ENCODE measurements at regions of chr1 and their contacts with region 1.

Region 1: DNA sequence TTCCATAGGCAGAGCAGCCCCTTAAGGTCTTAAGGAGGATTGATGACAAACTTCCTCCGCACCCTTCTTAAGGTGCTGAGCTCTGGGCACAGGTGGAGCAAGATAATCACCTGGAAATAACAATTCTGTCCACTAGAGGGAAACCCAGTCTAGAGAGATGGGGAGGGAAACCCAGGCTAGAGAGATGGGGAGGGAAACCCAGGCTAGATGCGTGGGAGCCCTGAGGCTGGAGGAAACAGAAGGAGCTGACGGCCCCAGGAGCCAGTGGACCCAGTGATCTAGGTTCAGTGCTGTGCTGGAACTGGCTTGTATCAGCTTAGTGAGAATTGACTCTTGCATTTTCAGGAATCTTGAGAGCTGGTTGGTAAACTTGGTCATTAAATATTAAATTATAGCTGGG is 17.8 kb upstream of the MYCL start:
- DNase-seq: peak; percentile 35
- ATAC-seq: peak; percentile 100
- H3K4me3 ChIP-seq: no peak overlapping the region
- H3K27ac ChIP-seq: no peak overlapping the region
- H3K4me1 ChIP-seq: 0 out of 2 replicates have a peak, but pooled peaks cover 3% of the 10 kb centered on the region
- H3K27me3 ChIP-seq: no peaks in the 10 kb centered on the region
- CTCF ChIP-seq: peak; percentile 70 to 91 (median 72)
- EP300 ChIP-seq: no peak
- POLR2A ChIP-seq: no peak
- RAD21 ChIP-seq: peak; percentile 99

Region 2: DNA sequence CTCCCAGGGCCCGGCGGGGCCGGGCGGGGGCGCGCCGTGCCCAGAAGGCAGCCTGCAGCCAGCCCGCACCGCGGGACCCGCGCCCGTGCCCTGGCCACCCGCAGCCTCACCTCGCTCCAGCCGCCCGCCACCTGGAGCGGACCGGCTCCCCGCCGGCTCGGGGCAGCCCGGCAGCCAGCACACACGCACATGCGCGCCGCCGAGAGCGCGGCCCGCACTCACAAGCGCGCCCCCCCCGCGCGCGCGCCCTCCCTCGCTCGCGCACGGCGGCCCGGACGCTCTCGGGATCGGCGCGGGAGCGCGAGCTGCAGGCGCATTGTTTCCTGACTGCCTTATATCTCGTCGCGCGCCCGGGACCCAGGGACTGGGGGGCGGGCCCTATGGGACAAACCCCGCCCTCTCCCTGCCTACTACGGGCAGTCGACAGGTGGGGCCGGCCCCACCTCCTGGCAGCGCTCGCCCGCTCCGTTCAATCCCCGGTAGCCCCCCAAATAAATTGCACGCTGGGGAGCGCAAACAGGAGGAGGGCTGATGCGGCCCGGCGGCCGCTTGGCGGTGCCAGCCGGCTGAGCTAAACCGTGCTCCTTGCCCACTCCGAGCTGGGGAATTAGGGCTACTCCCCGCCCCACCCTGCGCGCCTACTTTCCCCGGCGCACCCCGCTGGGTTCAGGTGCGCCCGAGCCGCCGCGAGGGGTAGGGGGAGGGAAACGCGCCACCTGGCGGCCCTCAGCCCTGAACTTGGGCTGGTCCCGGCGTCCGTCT is 17.7 kb before region 1 on chr1 and contains the start of gene MYCL:
- CTCF ChIA-PET with region 1: interaction called, 39 read pairs
- POLR2A ChIA-PET with region 1: no interaction called
- RAD21 ChIA-PET with region 1: interaction called, 9 read pairs
- SMC1A ChIA-PET with region 1: interaction called, 14 read pairs
- in situ Hi-C with region 1: no loop called
- intact Hi-C with region 1: no loop called
- DNase-seq: no peak
- ATAC-seq: peak; percentile 93
- H3K4me3 ChIP-seq: peak within 1 kb of the TSS; percentile 77
- H3K27ac ChIP-seq: no peak within 1 kb of the TSS
- H3K4me1 ChIP-seq: peaks cover 7% of the 10 kb centered on the region; the same call in 1 of the 2 replicates
- H3K27me3 ChIP-seq: peaks cover 10 to 12% of the 10 kb centered on the region in 2 experiments
- CTCF ChIP-seq: peak; percentile 61 to 84 (median 78)
- EP300 ChIP-seq: no peak
- POLR2A ChIP-seq: peak; percentile 63
- RAD21 ChIP-seq: peak; percentile 69
- polyA plus RNA-seq, gene MYCL: 0.11 to 0.26 TPM

Region 3: GRCh38 chr1:39949871-39950448 is 30.4 kb after region 1 on chr1:
- CTCF ChIA-PET with region 1: interaction called, 34 read pairs
- POLR2A ChIA-PET with region 1: no interaction called
- RAD21 ChIA-PET with region 1: interaction called, 23 read pairs
- SMC1A ChIA-PET with region 1: interaction called, 6 read pairs
- in situ Hi-C with region 1: no loop called
- intact Hi-C with region 1: no loop called
- DNase-seq: no peak
- ATAC-seq: no peak
- H3K4me3 ChIP-seq: no peak overlapping the region
- H3K27ac ChIP-seq: no peak overlapping the region
- H3K4me1 ChIP-seq: peaks cover 18% of the 10 kb centered on the region
- H3K27me3 ChIP-seq: no peaks in the 10 kb centered on the region
- CTCF ChIP-seq: no peak
- EP300 ChIP-seq: no peak
- POLR2A ChIP-seq: no peak
- RAD21 ChIP-seq: no peak

Region 4: DNA sequence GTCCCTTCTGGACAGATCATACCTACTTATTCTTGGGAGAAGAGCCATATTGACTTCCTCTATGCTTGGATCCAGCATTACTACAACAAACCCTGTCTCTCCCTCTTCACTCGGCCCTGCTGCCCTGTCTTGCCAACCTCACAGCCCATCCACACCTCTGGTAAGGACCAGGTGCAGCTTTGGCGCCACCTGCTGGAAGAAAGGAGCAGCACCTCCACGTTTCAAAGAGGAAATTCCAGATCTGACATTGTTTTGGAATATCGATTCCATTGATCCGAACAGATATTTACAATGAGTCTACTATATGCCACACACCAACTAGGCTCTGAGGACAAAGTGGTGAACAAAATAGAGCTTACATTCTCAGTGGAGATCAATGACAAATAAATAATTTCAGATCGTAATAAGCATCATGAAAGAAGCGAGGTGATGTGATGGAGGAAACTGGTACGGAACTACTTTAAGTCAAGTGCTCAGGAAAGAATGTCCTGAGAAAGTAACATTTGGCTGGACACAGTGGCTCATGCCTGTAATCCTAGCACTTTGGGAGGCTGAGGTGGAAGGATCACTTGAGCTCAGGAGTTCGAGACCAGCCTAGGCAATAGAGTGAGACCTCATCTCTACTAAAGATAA is 54.1 kb after region 1 on chr1:
- CTCF ChIA-PET with region 1: interaction called, 261 read pairs
- POLR2A ChIA-PET with region 1: interaction called, 12 read pairs
- RAD21 ChIA-PET with region 1: interaction called, 115 read pairs
- SMC1A ChIA-PET with region 1: interaction called, 157 read pairs
- in situ Hi-C with region 1: loop called (anchors 5 kb)
- intact Hi-C with region 1: loop called (anchors 1 kb)
- DNase-seq: no peak
- ATAC-seq: peak; percentile 87
- H3K4me3 ChIP-seq: no peak overlapping the region
- H3K27ac ChIP-seq: no peak overlapping the region
- H3K4me1 ChIP-seq: peaks cover 3% of the 10 kb centered on the region
- H3K27me3 ChIP-seq: no peaks in the 10 kb centered on the region
- CTCF ChIP-seq: peak; percentile 97
- EP300 ChIP-seq: no peak
- POLR2A ChIP-seq: no peak
- RAD21 ChIP-seq: peak; percentile 100

Region 5: DNA sequence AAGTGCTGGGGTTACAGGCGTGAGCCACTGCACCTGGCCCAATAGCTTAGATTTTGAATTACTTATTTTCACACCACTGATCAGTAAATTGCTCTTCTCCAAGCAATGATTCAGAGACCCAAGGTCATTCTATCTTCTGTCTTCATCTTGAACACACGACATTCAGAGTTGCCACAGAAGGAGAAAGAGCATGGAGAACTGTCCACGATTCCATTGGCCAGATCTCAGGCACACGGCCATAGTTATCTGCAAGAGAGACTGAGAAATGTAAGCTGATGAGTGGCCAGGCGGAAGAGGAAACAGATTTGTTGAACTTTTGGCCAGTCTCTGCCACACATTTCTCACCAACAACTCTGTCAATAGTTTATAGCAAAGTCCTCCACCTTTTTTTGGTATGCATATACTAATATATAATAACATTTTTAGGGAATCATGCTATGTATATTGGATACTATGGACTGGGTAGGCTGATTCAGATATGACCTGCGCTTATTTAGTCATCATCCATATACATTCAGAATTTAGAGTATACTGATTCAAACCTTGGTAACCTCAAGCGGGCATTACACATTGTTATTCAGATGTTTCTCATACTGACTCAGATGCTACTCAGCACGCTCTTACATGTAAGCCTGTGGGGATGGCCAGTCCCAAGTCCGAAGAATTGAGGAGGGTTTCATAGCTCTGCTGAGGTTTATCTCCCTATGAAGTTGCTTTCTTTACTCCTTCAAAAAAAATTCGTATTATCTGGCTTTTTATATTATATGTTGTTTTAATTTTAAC is 95.5 kb after region 1 on chr1:
- CTCF ChIA-PET with region 1: interaction called, 13 read pairs
- POLR2A ChIA-PET with region 1: interaction called, 7 read pairs
- RAD21 ChIA-PET with region 1: interaction called, 5 read pairs
- SMC1A ChIA-PET with region 1: interaction called, 5 read pairs
- in situ Hi-C with region 1: no loop called
- intact Hi-C with region 1: no loop called
- DNase-seq: no peak
- ATAC-seq: peak; percentile 68
- H3K4me3 ChIP-seq: no peak overlapping the region
- H3K27ac ChIP-seq: no peak overlapping the region
- H3K4me1 ChIP-seq: no peaks in the 10 kb centered on the region
- H3K27me3 ChIP-seq: no peaks in the 10 kb centered on the region
- CTCF ChIP-seq: no peak
- EP300 ChIP-seq: no peak
- POLR2A ChIP-seq: no peak
- RAD21 ChIP-seq: no peak

Region 6: DNA sequence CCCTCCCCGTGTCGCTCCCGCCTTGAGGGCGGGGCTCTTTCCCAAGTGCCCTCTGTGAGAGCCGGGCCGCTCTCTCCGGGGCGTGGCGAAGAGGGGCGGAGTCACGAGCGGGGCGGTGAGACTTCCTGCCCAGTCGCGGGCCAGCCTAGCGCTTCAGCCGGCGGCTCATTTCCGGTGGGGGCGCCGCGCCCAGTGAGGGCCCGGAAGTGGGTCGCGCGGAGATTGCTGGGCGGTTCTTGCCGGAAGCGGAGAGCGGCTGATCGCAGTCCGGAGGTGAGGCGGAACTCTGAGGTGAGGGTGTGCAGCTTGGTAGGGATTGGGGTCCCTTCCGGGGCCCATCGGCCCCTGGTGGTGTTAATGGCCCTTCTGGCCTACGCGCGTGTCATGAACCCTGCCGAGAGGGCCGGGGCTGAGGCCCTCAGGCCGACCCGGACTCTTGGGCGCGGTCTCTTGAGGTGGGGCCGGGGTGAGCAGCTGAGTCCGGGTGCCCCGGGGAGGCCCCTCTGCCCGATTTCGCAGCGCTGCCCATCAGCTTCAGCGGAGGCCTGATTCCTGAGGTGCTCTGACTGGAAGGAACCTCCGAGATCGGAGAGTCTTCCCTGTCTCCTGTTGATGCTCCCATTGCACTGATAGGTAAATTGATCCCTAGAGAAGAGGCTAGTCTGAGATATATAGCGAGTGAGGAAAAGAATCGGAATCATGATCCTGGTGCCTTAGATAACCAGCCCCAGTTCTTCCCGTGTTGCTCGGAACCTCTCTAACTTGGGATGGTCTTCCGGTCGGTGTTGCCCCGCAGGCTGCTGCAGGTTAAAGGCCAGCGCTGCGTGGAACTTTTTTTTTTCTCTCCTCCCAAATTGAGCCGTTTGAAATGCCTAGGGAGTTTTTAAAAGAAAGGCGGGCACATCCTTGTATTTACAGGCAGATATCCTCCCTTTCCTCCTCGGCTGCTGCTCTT is 121.2 kb after region 1 on chr1 and contains the start of gene CAP1:
- CTCF ChIA-PET with region 1: interaction called, 311 read pairs
- POLR2A ChIA-PET with region 1: no interaction called
- RAD21 ChIA-PET with region 1: interaction called, 14 read pairs
- SMC1A ChIA-PET with region 1: interaction called, 180 read pairs
- in situ Hi-C with region 1: loop called (anchors 5 kb)
- intact Hi-C with region 1: no loop called
- DNase-seq: peak; percentile 91
- ATAC-seq: peak; percentile 88
- H3K4me3 ChIP-seq: peak within 1 kb of the TSS; percentile 92
- H3K27ac ChIP-seq: peak within 1 kb of the TSS; percentile 100
- H3K4me1 ChIP-seq: peaks cover 8% of the 10 kb centered on the region; the same call in 1 of the 2 replicates
- H3K27me3 ChIP-seq: no peaks in the 10 kb centered on the region
- CTCF ChIP-seq: no peak
- EP300 ChIP-seq: no peak
- POLR2A ChIP-seq: peak; percentile 81
- RAD21 ChIP-seq: no peak
- polyA plus RNA-seq, gene CAP1: 413 to 441 TPM

Measured in GM12878 (cell line).